ENCODE measurements at regions of chr2 and their contacts with region 1.

Region 1: GRCh38 chr2:9474361-9474967 is at the start of gene IAH1:
- DNase-seq: peak; percentile 81
- H3K4me3 ChIP-seq: peak within 1 kb of the TSS; percentile 63 to 92 (median 74)
- H3K27ac ChIP-seq: peak within 1 kb of the TSS; percentile 82 to 92 (median 87)
- H3K4me1 ChIP-seq: peaks cover 0 to 45% (median 34%) of the 10 kb centered on the region in 4 donors
- H3K27me3 ChIP-seq: no peaks in the 10 kb centered on the region
- CTCF ChIP-seq: no peak
- EP300 ChIP-seq: no peak
- POLR2A ChIP-seq: no peak
- total RNA-seq, gene IAH1: 62.3 to 94.9 (median 84.9) TPM

Region 2: DNA sequence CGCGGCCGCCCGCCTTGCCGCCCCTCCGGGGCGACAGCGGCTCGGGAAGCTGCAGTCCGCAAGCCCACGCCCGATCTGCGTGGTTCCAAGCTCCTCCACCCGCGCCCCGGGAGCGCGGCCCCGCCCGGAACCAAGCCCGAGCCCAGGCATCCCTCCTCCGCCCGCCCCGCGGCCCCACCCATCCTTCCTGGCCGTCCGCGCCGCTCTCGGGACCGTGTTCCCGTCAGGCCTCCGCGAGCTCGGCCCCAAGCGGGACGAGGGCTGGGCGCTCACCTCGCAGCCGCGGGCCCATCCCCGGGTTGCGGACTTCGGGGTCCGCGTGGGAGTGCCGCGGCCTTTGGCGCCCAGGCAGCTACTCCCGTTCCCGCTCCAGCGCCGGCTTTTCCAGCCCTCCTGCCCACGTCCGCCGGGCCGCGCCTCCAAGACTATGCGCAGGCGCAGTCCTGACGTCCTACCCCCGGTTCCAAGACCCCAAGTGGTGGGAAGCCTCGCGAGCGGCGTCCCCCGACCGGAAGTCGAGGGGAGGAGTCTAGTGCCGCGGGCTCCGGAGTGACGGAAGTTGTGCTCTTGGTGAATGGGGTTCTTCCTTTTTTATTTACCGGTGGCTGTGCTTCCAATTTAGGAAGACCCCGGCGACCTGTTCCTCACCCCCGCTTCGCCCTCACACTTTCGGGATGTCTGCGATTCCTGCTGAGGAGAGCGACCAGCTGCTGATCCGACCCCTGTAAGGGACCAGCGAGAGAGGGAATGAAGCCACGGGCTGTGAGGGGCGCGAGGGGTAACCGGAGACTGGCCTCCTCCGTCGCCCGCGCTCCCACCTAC is 51.2 kb before region 1 on chr2 and contains the starts of genes CPSF3 and ITGB1BP1:
- intact Hi-C with region 1: loop called (anchors 2 kb)
- DNase-seq: peak; percentile 99
- H3K4me3 ChIP-seq: peak within 1 kb of the TSS; percentile 84 to 99 (median 93)
- H3K27ac ChIP-seq: peak within 1 kb of the TSS; percentile 94 to 97 (median 96)
- H3K4me1 ChIP-seq: peaks cover 0 to 38% (median 33%) of the 10 kb centered on the region in 4 donors
- H3K27me3 ChIP-seq: no peaks in the 10 kb centered on the region
- CTCF ChIP-seq: peak in 1 of 4 experiments; percentile 31
- EP300 ChIP-seq: peak in 1 of 4 donors; percentile 69
- POLR2A ChIP-seq: no peak
- total RNA-seq, gene CPSF3: 22.9 to 33.5 (median 27.5) TPM
- total RNA-seq, gene ITGB1BP1: 52.3 to 75.6 (median 61.6) TPM

Region 3: DNA sequence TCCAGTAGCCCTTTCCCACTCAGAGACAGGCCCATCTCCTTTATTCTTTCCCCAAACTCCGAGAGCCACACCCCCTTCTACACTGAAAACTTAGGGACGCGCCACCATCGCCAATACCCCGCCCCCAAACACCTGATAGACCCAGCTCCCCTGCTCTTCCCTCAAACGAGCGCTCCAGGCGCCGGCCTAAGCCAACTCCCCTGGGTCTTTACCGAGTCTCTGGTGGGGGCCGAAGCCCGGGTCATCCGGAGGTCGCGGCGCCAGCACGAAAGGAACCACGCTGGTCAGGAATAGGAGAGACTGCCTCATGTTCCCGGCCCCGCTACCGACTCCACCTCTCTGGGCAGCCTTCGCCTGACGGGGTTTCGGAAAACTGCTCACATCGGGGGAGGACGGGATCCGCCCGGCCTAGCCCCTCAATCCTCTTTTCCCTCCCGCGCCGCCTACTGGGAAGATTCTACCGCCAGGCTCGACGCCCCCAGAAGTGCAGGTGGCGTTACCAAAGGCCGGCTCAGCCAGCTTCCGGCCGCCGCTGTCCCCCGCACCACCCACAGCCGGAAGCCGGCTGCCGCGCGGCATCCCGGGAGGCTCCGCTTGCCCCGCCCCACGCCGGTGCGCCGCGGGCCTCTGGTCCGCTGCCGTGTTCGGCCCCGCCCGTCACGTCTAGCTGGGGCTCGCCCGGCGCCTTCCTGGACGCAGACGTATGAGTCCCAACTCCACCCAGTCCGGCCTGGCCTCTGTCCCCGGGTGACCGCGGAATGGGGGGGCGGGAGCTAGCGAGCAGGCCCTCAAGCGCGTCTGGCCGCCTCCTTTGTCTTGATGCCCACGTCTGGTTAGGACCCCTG is 81.1 kb after region 1 on chr2 and contains the start of gene ADAM17:
- intact Hi-C with region 1: loop called (anchors 5 kb)
- DNase-seq: peak; percentile 98
- H3K4me3 ChIP-seq: peak within 1 kb of the TSS; percentile 63 to 96 (median 79)
- H3K27ac ChIP-seq: peak within 1 kb of the TSS; percentile 92 to 99 (median 98)
- H3K4me1 ChIP-seq: peaks cover 0 to 67% (median 48%) of the 10 kb centered on the region in 4 donors
- H3K27me3 ChIP-seq: no peaks in the 10 kb centered on the region
- CTCF ChIP-seq: peak; percentile 67 to 83 (median 70)
- EP300 ChIP-seq: peak in 2 of 4 donors; percentile 51 to 61
- POLR2A ChIP-seq: peak; percentile 88
- total RNA-seq, gene ADAM17: 12.1 to 17.6 (median 16.1) TPM